ENCODE measurements at regions of chr12 and their contacts with region 1.

Region 1: GRCh38 chr12:45990468-45991283 is at the start of gene SCAF11:
- DNase-seq: peak; percentile 100
- ATAC-seq: peak; percentile 92
- H3K4me3 ChIP-seq: peak within 1 kb of the TSS; percentile 94
- H3K4me3 Mint-ChIP-seq: peak within 1 kb of the TSS; percentile 91 to 99 (median 96)
- H3K27ac ChIP-seq: peak within 1 kb of the TSS; percentile 97
- H3K27ac Mint-ChIP-seq: peak within 1 kb of the TSS; percentile 99 to 100 (median 100)
- H3K4me1 ChIP-seq: peaks cover 21 to 35% of the 10 kb centered on the region in 2 donors
- H3K4me1 Mint-ChIP-seq: peaks cover 36 to 53% (median 47%) of the 10 kb centered on the region in 7 donors
- H3K27me3 ChIP-seq: no peaks in the 10 kb centered on the region
- H3K27me3 Mint-ChIP-seq: peaks cover 0 to 15% (median 0%) of the 10 kb centered on the region in 5 donors
- total RNA-seq, gene SCAF11: 144 to 194 (median 165) TPM

Region 2: DNA sequence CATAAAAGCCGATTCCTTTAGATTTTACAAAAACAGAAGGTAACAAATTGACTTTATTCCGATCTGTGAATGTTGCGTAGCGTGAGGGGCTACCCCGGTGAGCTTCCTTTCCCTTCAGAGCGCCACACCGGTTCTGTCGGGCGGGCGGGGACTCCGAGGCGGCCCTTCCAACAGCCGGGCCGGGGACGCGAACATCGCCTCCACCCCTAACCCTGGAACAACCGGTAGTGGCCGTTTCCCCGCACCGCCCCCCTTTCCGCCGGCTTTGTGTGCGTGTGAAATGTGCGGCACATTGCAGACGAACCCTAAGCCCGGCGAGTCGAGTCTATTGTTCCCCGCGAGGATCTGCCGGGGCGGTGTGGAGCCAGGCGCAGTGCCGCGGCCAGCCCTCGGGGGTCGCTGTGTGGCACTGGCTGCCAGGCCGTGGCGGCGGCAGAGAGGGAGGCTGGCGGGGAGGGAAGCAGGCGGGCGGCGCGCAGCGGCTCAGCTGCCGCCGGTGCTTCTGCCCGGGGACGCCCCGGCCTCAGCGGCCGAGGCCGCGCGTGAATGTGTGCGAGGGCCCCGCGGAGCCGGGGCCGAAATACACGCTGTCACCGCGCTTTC is 261.9 kb before region 1 on chr12:
- CTCF ChIA-PET with region 1: interaction called, 3 read pairs
- POLR2A ChIA-PET with region 1: interaction called, 48 read pairs
- intact Hi-C with region 1: loop called (anchors 1 kb)
- DNase-seq: peak; percentile 95 to 99 (median 98)
- ATAC-seq: peak; percentile 85
- H3K4me3 ChIP-seq: peak overlapping the region; percentile 91
- H3K4me3 Mint-ChIP-seq: peak overlapping the region; percentile 85 to 100 (median 98)
- H3K27ac ChIP-seq: peak overlapping the region; percentile 96
- H3K27ac Mint-ChIP-seq: peak overlapping the region; percentile 82 to 99 (median 99)
- H3K4me1 ChIP-seq: peaks cover 10 to 31% of the 10 kb centered on the region in 2 donors
- H3K4me1 Mint-ChIP-seq: peaks cover 13 to 39% (median 30%) of the 10 kb centered on the region in 7 donors
- H3K27me3 ChIP-seq: no peaks in the 10 kb centered on the region
- H3K27me3 Mint-ChIP-seq: no peaks in the 10 kb centered on the region

Region 3: GRCh38 chr12:46217541-46218321 is 227.1 kb after region 1 on chr12:
- CTCF ChIA-PET with region 1: interaction called, 3 read pairs
- POLR2A ChIA-PET with region 1: interaction called, 7 read pairs
- intact Hi-C with region 1: loop called (anchors 1 kb)
- DNase-seq: peak in 8 of 9 donors; percentile 58 to 87 (median 84)
- ATAC-seq: peak; percentile 54
- H3K4me3 ChIP-seq: peak overlapping the region; percentile 41
- H3K4me3 Mint-ChIP-seq: peak overlapping the region; percentile 74 to 89 (median 81)
- H3K27ac ChIP-seq: peak overlapping the region; percentile 78
- H3K27ac Mint-ChIP-seq: peak overlapping the region; percentile 89 to 100 (median 99)
- H3K4me1 ChIP-seq: peaks cover 95% of the 10 kb centered on the region in 2 donors
- H3K4me1 Mint-ChIP-seq: peaks cover 69 to 100% (median 98%) of the 10 kb centered on the region in 7 donors
- H3K27me3 ChIP-seq: no peaks in the 10 kb centered on the region
- H3K27me3 Mint-ChIP-seq: no peaks in the 10 kb centered on the region

Region 4: DNA sequence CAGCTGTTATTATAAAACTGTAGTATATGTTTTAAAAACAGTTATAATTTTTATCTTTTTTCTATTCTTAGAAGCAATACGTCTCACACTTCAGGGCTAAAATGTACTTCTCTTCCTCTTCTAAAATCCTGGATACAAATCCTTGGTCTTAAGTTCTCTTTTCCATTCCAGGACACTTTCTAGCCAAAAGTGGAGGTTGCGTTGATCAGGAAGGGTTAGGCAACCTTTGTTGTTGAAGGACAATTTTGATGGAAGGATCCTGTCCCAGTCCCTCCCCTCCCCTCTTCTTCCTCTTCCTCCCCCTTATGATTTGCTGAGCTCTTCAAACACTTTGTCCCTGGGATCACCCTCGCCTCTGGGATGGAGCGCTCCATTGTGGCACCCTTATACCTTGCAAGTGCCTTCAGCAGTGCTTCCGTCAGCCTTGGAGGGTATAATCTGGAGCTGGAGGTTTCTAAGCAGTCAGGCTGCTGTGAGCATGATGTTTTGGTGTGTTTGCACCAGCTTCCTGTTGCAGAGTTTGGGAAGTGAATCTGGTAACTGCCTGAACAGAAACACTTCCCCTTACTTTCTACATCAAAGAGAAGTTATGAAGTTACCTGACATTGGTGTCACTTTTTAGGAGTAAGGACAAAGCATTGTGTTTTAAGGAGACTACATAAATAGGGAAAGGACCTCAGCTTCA is 469.3 kb after region 1 on chr12:
- CTCF ChIA-PET with region 1: no interaction called
- POLR2A ChIA-PET with region 1: no interaction called
- intact Hi-C with region 1: loop called in 1 of 2 experiments (anchors 2 kb)
- DNase-seq: peak in 4 of 9 donors; percentile 10 to 38 (median 26)
- ATAC-seq: peak; percentile 63
- H3K4me3 ChIP-seq: peak overlapping the region; percentile 47
- H3K4me3 Mint-ChIP-seq: peak overlapping the region; percentile 74 to 95 (median 88)
- H3K27ac ChIP-seq: peak overlapping the region; percentile 42
- H3K27ac Mint-ChIP-seq: peak overlapping the region; percentile 86 to 99 (median 96)
- H3K4me1 ChIP-seq: peaks cover 26 to 56% of the 10 kb centered on the region in 2 donors
- H3K4me1 Mint-ChIP-seq: peaks cover 45 to 67% (median 61%) of the 10 kb centered on the region in 7 donors
- H3K27me3 ChIP-seq: no peaks in the 10 kb centered on the region
- H3K27me3 Mint-ChIP-seq: no peaks in the 10 kb centered on the region

Region 5: GRCh38 chr12:47085815-47086252 is 1095.2 kb after region 1 on chr12:
- CTCF ChIA-PET with region 1: no interaction called
- POLR2A ChIA-PET with region 1: no interaction called
- intact Hi-C with region 1: loop called in 1 of 2 experiments (anchors 2 kb)
- DNase-seq: peak in 5 of 9 donors; percentile 26 to 54 (median 32)
- ATAC-seq: peak; percentile 85
- H3K4me3 ChIP-seq: peak overlapping the region; percentile 3
- H3K4me3 Mint-ChIP-seq: peak overlapping the region in 9 of 10 donors; percentile 8 to 85 (median 30)
- H3K27ac ChIP-seq: no peak overlapping the region
- H3K27ac Mint-ChIP-seq: peak overlapping the region; percentile 8 to 99 (median 81)
- H3K4me1 ChIP-seq: peaks cover 38 to 42% of the 10 kb centered on the region in 2 donors
- H3K4me1 Mint-ChIP-seq: peaks cover 42 to 74% (median 61%) of the 10 kb centered on the region in 7 donors
- H3K27me3 ChIP-seq: no peaks in the 10 kb centered on the region
- H3K27me3 Mint-ChIP-seq: no peaks in the 10 kb centered on the region

Region 6: GRCh38 chr12:47904713-47905310 is 1914.1 kb after region 1 on chr12 and contains the start of gene VDR:
- CTCF ChIA-PET with region 1: no interaction called
- POLR2A ChIA-PET with region 1: no interaction called
- intact Hi-C with region 1: loop called in 1 of 2 experiments (anchors 10 kb)
- DNase-seq: peak; percentile 42 to 76 (median 64)
- ATAC-seq: peak; percentile 86
- H3K4me3 ChIP-seq: peak within 1 kb of the TSS; percentile 73
- H3K4me3 Mint-ChIP-seq: peak within 1 kb of the TSS; percentile 86 to 98 (median 94)
- H3K27ac ChIP-seq: peak within 1 kb of the TSS; percentile 44
- H3K27ac Mint-ChIP-seq: peak within 1 kb of the TSS; percentile 51 to 88 (median 74)
- H3K4me1 ChIP-seq: peaks cover 25 to 41% of the 10 kb centered on the region in 2 donors
- H3K4me1 Mint-ChIP-seq: peaks cover 35 to 57% (median 47%) of the 10 kb centered on the region in 7 donors
- H3K27me3 ChIP-seq: no peaks in the 10 kb centered on the region
- H3K27me3 Mint-ChIP-seq: peaks cover 0 to 34% (median 0%) of the 10 kb centered on the region in 5 donors
- total RNA-seq, gene VDR: 1.6 to 82.6 (median 2.9) TPM